Left colon (tissue), 2 donors: ENCODE measurements at regions of chr9 and their contacts with region 1.

Region 1: DNA sequence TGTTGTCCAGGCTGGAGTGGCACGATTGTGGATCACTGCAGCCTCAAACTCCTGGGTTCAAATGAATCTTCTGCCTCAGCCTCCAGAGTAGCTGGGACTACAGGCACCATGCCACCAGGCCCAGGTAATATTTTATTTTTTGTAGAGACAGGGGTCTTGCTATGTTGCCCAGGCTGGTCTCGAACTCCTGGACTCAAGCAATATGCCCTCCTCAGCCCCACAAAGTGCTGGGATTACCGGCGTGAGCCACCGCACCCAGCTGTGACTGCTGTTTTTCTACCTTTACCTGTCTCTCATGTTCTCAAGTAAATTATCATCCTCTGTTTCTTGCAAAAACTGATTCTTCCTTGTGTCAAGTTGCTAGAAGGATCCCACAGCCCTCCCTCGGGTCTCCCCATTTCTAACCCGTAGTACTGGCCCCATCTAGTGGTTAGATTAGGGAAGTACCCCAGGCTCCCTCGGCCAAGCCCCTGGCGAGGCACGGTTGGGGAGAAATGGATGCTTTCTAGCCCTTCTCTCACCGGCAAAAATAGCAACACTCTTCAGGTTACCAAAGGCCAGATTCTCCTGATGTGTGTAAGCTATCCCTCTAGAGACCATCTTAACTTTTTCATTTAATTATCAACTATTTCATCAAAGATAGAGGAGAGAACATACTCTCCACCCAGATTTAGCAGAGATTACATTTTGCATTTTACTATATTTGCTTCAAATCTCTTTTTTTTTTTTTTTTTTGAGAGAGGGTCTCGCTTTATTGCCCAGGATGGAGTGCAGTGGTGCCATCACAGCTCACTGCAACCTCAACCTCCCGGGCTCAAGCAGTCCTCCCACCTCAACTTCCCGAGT is 19.2 kb upstream of the TOR1B start:
- DNase-seq: peak in 1 of 2 donors; percentile 60
- ATAC-seq: peak; percentile 94

Region 2: GRCh38 chr9:129641746-129642513 is 141.8 kb before region 1 on chr9 and contains the start of gene ASB6:
- intact Hi-C with region 1: loop called in 1 of 2 experiments (anchors 5 kb)
- DNase-seq: peak; percentile 96 to 97
- ATAC-seq: peak; percentile 91
- total RNA-seq, gene ASB6: 17.5 to 18.3 TPM

Region 3: DNA sequence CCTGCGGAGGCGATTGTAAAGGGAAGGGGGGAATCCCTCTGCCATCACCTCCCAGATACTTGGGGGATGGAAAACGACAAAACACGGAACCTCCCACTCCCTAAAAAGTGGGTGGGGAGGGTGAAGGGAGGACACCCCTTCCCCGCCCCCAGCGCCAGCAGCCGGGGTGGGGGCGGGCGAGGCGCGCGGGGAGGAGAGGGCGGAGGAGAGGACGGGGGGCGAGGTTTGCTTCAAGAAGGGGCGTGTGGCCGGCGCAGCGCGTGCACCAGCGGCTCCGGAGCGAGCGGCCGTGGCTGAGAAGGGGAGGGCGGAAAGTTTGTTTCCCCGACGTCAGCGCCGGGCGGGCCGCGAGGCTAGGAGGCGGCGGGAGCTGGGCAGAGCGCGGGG is 118.4 kb before region 1 on chr9 and contains the start of gene PRRX2:
- intact Hi-C with region 1: no loop called
- DNase-seq: no peak
- ATAC-seq: no peak
- total RNA-seq, gene PRRX2: 0.52 to 1.1 TPM

Region 4: DNA sequence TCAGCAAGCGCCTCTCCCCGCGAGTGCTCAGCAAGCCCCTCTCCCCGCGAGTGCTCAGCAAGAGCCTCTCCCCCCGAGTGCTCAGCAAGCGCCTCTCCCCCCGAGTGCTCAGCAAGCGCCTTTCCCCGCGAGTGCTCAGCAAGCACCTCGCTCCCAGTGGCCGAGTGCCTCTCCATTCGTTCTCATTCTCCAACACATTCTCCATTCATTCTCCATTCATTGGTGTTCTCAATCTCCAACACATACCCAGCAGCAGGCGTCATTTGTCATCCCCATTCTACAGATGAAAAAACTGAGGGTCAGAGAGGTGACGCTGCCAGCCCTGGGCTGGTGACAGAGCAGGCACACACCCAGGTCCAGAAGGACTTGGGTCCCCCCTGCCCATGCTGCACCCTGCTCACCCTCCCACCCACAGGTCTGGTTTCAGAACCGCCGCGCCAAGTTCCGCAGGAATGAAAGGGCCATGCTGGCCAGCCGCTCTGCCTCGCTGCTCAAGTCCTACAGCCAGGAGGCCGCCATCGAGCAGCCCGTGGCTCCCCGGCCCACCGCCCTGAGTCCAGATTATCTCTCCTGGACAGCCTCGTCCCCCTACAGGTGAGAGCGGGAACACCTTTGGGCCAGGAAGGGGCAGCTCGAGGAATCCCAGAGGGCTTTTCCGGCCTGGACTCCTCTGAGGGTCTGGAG is 63.4 kb before region 1 on chr9:
- intact Hi-C with region 1: no loop called
- DNase-seq: no peak
- ATAC-seq: peak; percentile 25

Region 5: DNA sequence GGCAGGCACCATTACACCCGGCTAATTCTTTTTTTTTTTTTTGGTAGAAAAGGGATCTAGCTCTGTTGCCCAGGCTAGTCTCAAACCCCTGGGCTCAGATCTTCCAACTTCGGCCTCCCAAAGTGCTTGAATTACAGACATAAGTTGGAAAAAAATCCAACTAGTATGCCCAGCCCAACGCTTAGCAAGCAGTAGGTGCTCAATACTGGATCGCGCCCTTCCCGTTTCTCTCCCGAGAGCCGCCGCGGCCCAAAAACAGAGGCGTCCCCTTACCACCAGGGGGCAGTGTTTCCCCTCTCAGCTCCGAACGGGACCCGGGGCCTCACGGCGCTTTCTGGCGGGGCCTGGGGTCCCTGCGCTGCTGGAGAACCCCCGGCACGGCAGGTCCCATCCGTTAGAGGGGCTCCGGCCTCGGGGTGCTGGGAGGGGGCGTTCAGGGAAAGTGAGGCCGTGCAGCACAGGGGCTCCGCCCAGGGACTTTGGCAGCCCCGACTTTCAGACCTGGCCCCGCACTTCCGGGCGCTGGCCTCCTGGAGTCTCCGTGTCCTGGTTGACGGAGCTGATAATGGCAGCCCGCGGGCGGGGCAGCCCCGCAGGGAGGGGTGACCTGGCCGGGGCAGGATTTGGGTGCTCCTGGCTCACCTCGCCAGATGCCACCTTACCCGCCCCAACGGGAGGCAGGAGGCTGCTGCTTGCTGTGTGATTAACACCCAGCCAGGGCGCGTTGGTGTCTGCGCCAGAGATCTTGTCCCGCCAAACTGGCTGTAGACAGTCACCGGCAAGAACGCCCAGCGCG is 46.1 kb before region 1 on chr9:
- intact Hi-C with region 1: loop called (anchors 5 to 10 kb)
- DNase-seq: peak; percentile 70 to 90
- ATAC-seq: peak; percentile 94